PC-9 (cell line): ENCODE measurements at regions of chr1 and their contacts with region 1.

Region 1: GRCh38 chr1:45339789-45340570 is at the starts of genes MUTYH and TOE1:
- DNase-seq: peak; percentile 79 to 97
- H3K4me3 ChIP-seq: peak within 1 kb of the TSS; percentile 68
- H3K27ac ChIP-seq: peak within 1 kb of the TSS; percentile 86
- H3K4me1 ChIP-seq: peaks cover 55% of the 10 kb centered on the region
- H3K27me3 ChIP-seq: no peaks in the 10 kb centered on the region
- CTCF ChIP-seq: 0 out of 2 replicates have a peak, but pooled peaks have one; percentile 24
- total RNA-seq, gene MUTYH: 52.4 and 53.2 TPM in 2 replicates
- total RNA-seq, gene TOE1: 14.5 and 20.4 TPM in 2 replicates

Region 2: DNA sequence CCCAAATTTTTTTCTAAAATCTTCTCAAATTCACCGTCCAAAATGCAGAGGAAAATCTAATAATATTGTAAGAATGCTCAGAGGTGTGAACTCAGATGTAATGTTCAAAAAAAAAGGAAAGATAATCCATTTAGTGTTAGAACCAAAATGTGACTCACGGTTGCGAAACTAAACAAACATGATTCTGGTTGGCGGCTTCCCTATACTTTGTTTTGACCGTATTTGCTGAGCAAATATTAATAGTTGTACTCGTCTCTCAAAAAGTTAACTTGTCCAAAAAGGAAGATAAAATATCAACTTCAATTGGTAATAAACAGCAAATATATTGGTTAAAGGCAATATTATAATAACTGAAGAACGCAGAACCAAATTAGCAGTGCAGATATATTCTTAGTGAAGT is 168.0 kb before region 1 on chr1:
- CTCF ChIA-PET with region 1: no interaction called
- POLR2A ChIA-PET with region 1: interaction called, 17 read pairs
- intact Hi-C with region 1: no loop called
- DNase-seq: peak; percentile 18 to 72
- H3K4me3 ChIP-seq: peak overlapping the region; percentile 6; the same call in 1 of the 2 replicates
- H3K27ac ChIP-seq: no peak overlapping the region
- H3K4me1 ChIP-seq: peaks cover 30% of the 10 kb centered on the region
- H3K27me3 ChIP-seq: no peaks in the 10 kb centered on the region
- CTCF ChIP-seq: no peak

Region 3: GRCh38 chr1:45326627-45327623 is 13.1 kb before region 1 on chr1 and contains the start of gene HPDL:
- CTCF ChIA-PET with region 1: interaction called, 3 read pairs
- POLR2A ChIA-PET with region 1: interaction called, 11 read pairs
- intact Hi-C with region 1: loop called (anchors 1 kb)
- DNase-seq: peak in 1 of 2 experiments; percentile 47
- H3K4me3 ChIP-seq: peak within 1 kb of the TSS; percentile 85
- H3K27ac ChIP-seq: peak within 1 kb of the TSS; percentile 77
- H3K4me1 ChIP-seq: peaks cover 41% of the 10 kb centered on the region
- H3K27me3 ChIP-seq: no peaks in the 10 kb centered on the region
- CTCF ChIP-seq: no peak
- total RNA-seq, gene HPDL: 10.4 and 12.7 TPM in 2 replicates

Region 4: GRCh38 chr1:45359882-45360513 is 20.0 kb after region 1 on chr1:
- CTCF ChIA-PET with region 1: no interaction called
- POLR2A ChIA-PET with region 1: interaction called, 15 read pairs
- intact Hi-C with region 1: no loop called
- DNase-seq: peak; percentile 49 to 64
- H3K4me3 ChIP-seq: no peak overlapping the region
- H3K27ac ChIP-seq: no peak overlapping the region
- H3K4me1 ChIP-seq: peaks cover 21% of the 10 kb centered on the region
- H3K27me3 ChIP-seq: no peaks in the 10 kb centered on the region
- CTCF ChIP-seq: peak; percentile 84

Region 5: GRCh38 chr1:45809761-45810160 is 469.8 kb after region 1 on chr1:
- CTCF ChIA-PET with region 1: no interaction called
- POLR2A ChIA-PET with region 1: interaction called, 29 read pairs
- intact Hi-C with region 1: no loop called
- DNase-seq: peak in 1 of 2 experiments; percentile 39
- H3K4me3 ChIP-seq: no peak overlapping the region
- H3K27ac ChIP-seq: peak overlapping the region; percentile 17
- H3K4me1 ChIP-seq: peaks cover 14% of the 10 kb centered on the region
- H3K27me3 ChIP-seq: no peaks in the 10 kb centered on the region
- CTCF ChIP-seq: no peak